ENCODE measurements at regions of chr12 and their contacts with region 1.

Region 1: GRCh38 chr12:55973598-55974307 is at the start of gene RAB5B:
- DNase-seq: peak; percentile 99
- H3K4me3 Mint-ChIP-seq: no peak within 1 kb of the TSS
- H3K27ac Mint-ChIP-seq: no peak within 1 kb of the TSS
- H3K4me1 Mint-ChIP-seq: peaks cover 28% of the 10 kb centered on the region
- H3K27me3 Mint-ChIP-seq: no peaks in the 10 kb centered on the region
- total RNA-seq, gene RAB5B: 70.1 to 71.5 TPM

Region 2: DNA sequence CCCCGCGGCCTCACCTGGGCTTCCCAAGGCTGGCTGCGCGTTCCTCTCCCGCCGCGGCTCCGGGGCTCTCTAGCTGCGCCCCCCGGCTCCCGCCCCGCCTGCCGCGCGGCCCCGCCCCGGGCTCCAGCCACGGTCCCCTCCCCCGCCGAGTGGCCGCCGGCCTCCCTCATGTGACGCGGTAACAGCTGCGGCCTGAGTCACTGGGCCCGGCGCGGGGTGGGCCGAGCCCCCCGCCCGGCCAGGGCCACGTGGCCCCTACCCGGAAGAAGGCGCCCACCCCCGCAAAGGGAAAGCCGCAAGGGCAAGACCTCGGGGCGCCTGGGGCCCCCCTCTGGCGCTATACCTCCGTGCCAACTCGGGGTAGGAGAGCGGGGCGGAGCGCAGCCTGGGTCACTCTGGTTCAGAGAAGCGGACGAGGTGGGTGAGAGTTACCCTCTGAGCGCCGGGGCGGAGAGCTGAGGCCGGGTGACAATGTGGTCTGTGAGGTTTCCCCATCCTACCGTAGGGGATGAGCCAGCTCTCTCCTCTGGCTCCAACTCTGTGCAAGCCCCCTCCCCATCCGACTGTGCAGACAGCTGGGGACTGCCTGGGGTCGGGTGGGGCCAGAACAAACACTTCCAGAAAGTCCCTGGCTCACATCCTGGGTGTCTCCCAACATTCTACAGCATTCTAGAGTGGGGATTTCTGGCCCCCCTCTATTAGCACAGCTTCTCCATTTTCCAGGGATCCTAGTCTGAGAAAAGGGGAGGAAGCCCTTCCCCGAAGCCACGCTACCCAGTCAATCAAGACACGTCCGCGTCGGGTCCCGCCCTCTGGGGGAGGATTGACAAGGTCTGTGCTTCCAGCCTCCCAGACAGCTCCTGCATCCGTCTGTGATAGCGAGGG is 244.6 kb before region 1 on chr12 and contains the start of gene CD63:
- CTCF ChIA-PET with region 1: no interaction called
- POLR2A ChIA-PET with region 1: interaction called, 11 read pairs
- DNase-seq: peak; percentile 67
- H3K4me3 Mint-ChIP-seq: peak within 1 kb of the TSS; percentile 87
- H3K27ac Mint-ChIP-seq: peak within 1 kb of the TSS; percentile 85
- H3K4me1 Mint-ChIP-seq: peaks cover 44% of the 10 kb centered on the region
- H3K27me3 Mint-ChIP-seq: no peaks in the 10 kb centered on the region
- total RNA-seq, gene CD63: 177 to 185 TPM

Region 3: GRCh38 chr12:55817346-55818139 is 156.2 kb before region 1 on chr12 and contains the starts of genes ORMDL2 and SARNP:
- CTCF ChIA-PET with region 1: interaction called, 7 read pairs
- POLR2A ChIA-PET with region 1: interaction called, 12 read pairs
- DNase-seq: peak; percentile 98
- H3K4me3 Mint-ChIP-seq: no peak within 1 kb of the TSS
- H3K27ac Mint-ChIP-seq: no peak within 1 kb of the TSS
- H3K4me1 Mint-ChIP-seq: peaks cover 47% of the 10 kb centered on the region
- H3K27me3 Mint-ChIP-seq: no peaks in the 10 kb centered on the region
- total RNA-seq, gene ORMDL2: 56.3 to 60.2 TPM
- total RNA-seq, gene SARNP: 88.3 to 88.6 TPM

Region 4: GRCh38 chr12:55926738-55927587 is 46.8 kb before region 1 on chr12:
- CTCF ChIA-PET with region 1: interaction called, 12 read pairs
- POLR2A ChIA-PET with region 1: interaction called, 33 read pairs
- DNase-seq: peak; percentile 95
- H3K4me3 Mint-ChIP-seq: peak overlapping the region; percentile 91
- H3K27ac Mint-ChIP-seq: peak overlapping the region; percentile 96
- H3K4me1 Mint-ChIP-seq: peaks cover 53% of the 10 kb centered on the region
- H3K27me3 Mint-ChIP-seq: no peaks in the 10 kb centered on the region

Region 5: GRCh38 chr12:55996715-55997534 is 23.2 kb after region 1 on chr12 and contains the start of gene SUOX:
- CTCF ChIA-PET with region 1: interaction called, 26 read pairs
- POLR2A ChIA-PET with region 1: interaction called, 9 read pairs
- DNase-seq: peak; percentile 46
- H3K4me3 Mint-ChIP-seq: peak within 1 kb of the TSS; percentile 66
- H3K27ac Mint-ChIP-seq: no peak within 1 kb of the TSS
- H3K4me1 Mint-ChIP-seq: peaks cover 38% of the 10 kb centered on the region
- H3K27me3 Mint-ChIP-seq: no peaks in the 10 kb centered on the region
- total RNA-seq, gene SUOX: 4.2 to 5.3 TPM

Region 6: DNA sequence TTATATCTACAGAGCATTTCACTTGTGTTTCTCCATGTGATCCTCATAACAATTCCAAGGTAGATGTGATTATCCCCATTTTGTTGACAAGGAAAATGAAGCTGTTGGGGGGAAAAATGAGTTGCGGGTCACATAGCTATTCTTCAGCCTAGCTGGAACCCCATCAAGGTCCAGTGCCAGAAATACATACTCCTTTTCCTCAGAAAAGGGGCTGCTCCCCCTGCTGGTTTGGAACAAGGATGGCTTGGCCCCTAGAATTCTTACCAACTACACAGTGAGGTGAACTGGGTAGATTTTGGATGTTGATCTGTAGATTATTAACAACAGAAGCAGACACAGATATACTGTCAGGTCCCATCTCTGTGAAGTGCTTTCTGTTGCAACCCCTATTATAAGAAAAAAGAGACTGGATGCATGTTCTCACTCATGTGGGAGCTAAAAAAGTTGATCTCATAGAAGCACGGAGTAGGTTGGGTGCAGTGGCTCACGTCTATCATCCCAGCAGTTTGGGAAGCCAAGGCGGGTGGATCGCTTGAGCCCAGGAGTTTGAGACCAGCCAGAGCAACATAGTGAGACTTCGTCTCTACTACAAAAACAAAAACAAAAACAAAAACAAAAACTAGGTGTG is 56.0 kb after region 1 on chr12:
- CTCF ChIA-PET with region 1: interaction called, 12 read pairs
- POLR2A ChIA-PET with region 1: interaction called, 3 read pairs
- DNase-seq: peak; percentile 52
- H3K4me3 Mint-ChIP-seq: no peak overlapping the region
- H3K27ac Mint-ChIP-seq: peak overlapping the region; percentile 21
- H3K4me1 Mint-ChIP-seq: peaks cover 53% of the 10 kb centered on the region
- H3K27me3 Mint-ChIP-seq: no peaks in the 10 kb centered on the region

Region 7: DNA sequence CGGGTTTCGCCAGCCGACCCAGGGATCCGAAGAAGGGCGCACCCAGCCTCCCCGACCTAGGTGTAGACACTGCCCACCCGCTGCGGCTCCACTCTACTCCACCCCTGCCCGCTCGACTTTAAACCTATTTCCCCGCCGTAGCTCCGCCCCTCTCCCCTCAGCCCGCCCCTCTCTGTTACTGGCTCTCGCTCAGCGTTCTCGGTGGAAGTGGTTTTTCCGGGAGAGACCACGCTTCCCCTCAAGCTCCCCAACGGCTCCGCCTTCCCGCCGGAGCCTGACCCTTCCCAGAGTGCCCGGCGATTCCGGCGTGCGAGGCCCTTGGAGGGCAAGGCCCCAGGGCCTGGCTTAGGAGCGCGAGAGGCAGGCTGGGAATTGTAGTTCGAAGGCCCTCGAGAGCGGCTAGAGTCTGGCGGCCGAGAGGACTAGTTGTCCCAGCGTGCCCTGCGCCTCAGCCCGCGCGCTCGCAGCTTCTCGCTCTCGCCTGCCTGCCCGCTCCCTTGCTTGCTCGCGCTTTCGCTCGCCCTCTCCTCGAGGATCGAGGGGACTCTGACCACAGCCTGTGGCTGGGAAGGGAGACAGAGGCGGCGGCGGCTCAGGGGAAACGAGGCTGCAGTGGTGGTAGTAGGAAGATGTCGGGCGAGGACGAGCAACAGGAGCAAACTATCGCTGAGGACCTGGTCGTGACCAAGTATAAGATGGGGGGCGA is 130.5 kb after region 1 on chr12 and contains the start of gene PA2G4:
- CTCF ChIA-PET with region 1: no interaction called
- POLR2A ChIA-PET with region 1: interaction called, 13 read pairs
- DNase-seq: peak; percentile 99
- H3K4me3 Mint-ChIP-seq: peak within 1 kb of the TSS; percentile 99
- H3K27ac Mint-ChIP-seq: peak within 1 kb of the TSS; percentile 98
- H3K4me1 Mint-ChIP-seq: peaks cover 53% of the 10 kb centered on the region
- H3K27me3 Mint-ChIP-seq: no peaks in the 10 kb centered on the region
- total RNA-seq, gene PA2G4: 242 to 243 TPM

Region 8: GRCh38 chr12:56377310-56377988 is 403.7 kb after region 1 on chr12:
- CTCF ChIA-PET with region 1: no interaction called
- POLR2A ChIA-PET with region 1: no interaction called
- DNase-seq: no peak
- H3K4me3 Mint-ChIP-seq: no peak overlapping the region
- H3K27ac Mint-ChIP-seq: no peak overlapping the region
- H3K4me1 Mint-ChIP-seq: no peaks in the 10 kb centered on the region
- H3K27me3 Mint-ChIP-seq: peaks cover 3% of the 10 kb centered on the region

Measured in activated CD4-positive, alpha-beta memory T cell treated with anti-CD3 and anti-CD28 coated beads, Interleukin-2, amount 10 ng/mL, durations not matched to agents 7 days and 5 days (primary cell).